PC-3 (cell line): ENCODE measurements at regions of chr4 and their contacts with region 1.

Region 1: GRCh38 chr4:165327211-165328100 is at the start of gene MSMO1:
- DNase-seq: peak; percentile 98
- ATAC-seq: peak; percentile 97
- H3K4me3 ChIP-seq: peak within 1 kb of the TSS; percentile 96
- H3K27ac ChIP-seq: peak within 1 kb of the TSS; percentile 73
- H3K4me1 ChIP-seq: peaks cover 17% of the 10 kb centered on the region
- H3K27me3 ChIP-seq: no peaks in the 10 kb centered on the region
- CTCF ChIP-seq: no peak
- total RNA-seq, gene MSMO1: 30.5 and 37.6 TPM in 2 replicates

Region 2: GRCh38 chr4:165112368-165113139 is 214.9 kb before region 1 on chr4 and contains the start of gene TMEM192:
- CTCF ChIA-PET with region 1: interaction called, 6 read pairs
- POLR2A ChIA-PET with region 1: no interaction called
- intact Hi-C with region 1: loop called (anchors 5 kb)
- DNase-seq: peak; percentile 84
- ATAC-seq: peak; percentile 96
- H3K4me3 ChIP-seq: peak within 1 kb of the TSS; percentile 95
- H3K27ac ChIP-seq: 0 out of 2 replicates have a peak within 1 kb of the TSS, but pooled peaks have one; percentile 7
- H3K4me1 ChIP-seq: 0 out of 2 replicates have a peak, but pooled peaks cover 5% of the 10 kb centered on the region
- H3K27me3 ChIP-seq: no peaks in the 10 kb centered on the region
- CTCF ChIP-seq: peak; percentile 28
- total RNA-seq, gene TMEM192: 6.8 and 7.4 TPM in 2 replicates

Region 3: GRCh38 chr4:165207431-165208220 is 119.8 kb before region 1 on chr4 and contains the start of gene KLHL2:
- CTCF ChIA-PET with region 1: no interaction called
- POLR2A ChIA-PET with region 1: no interaction called
- intact Hi-C with region 1: loop called (anchors 1 kb)
- DNase-seq: peak; percentile 65
- ATAC-seq: peak; percentile 62
- H3K4me3 ChIP-seq: peak within 1 kb of the TSS; percentile 95
- H3K27ac ChIP-seq: no peak within 1 kb of the TSS
- H3K4me1 ChIP-seq: peaks cover 61% of the 10 kb centered on the region
- H3K27me3 ChIP-seq: no peaks in the 10 kb centered on the region
- CTCF ChIP-seq: no peak
- total RNA-seq, gene KLHL2: 10.0 and 11.0 TPM in 2 replicates

Region 4: GRCh38 chr4:165343353-165344191 is 16.1 kb after region 1 on chr4:
- CTCF ChIA-PET with region 1: interaction called, 4 read pairs
- POLR2A ChIA-PET with region 1: interaction called, 12 read pairs
- intact Hi-C with region 1: no loop called
- DNase-seq: peak; percentile 55
- ATAC-seq: peak; percentile 63
- H3K4me3 ChIP-seq: no peak overlapping the region
- H3K27ac ChIP-seq: no peak overlapping the region
- H3K4me1 ChIP-seq: no peaks in the 10 kb centered on the region
- H3K27me3 ChIP-seq: no peaks in the 10 kb centered on the region
- CTCF ChIP-seq: peak; percentile 70

Region 5: DNA sequence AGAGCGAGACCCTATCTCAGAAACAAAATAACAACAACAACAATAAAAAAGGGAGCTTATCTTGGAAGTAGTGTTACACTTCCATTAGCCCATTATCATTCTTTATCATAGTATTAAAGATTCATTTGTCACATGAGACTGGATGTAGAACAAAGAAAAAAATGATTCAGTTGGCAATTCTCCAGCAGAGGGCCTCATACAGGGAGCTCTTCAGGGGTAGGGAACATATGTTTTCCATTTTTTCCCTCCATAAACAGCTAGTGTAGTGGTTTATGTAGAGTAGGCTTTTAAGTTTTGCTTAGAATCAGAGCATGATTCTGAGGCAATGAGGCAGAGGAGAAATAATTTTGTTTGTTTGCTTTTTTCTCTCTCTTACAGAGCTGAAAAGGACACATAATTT is 57.1 kb after region 1 on chr4:
- CTCF ChIA-PET with region 1: no interaction called
- POLR2A ChIA-PET with region 1: no interaction called
- intact Hi-C with region 1: no loop called
- DNase-seq: no peak
- ATAC-seq: no peak
- H3K4me3 ChIP-seq: no peak overlapping the region
- H3K27ac ChIP-seq: no peak overlapping the region
- H3K4me1 ChIP-seq: no peaks in the 10 kb centered on the region
- H3K27me3 ChIP-seq: no peaks in the 10 kb centered on the region
- CTCF ChIP-seq: no peak